Endothelial cell of umbilical vein (primary cell): ENCODE measurements at regions of chr13 and their contacts with region 1.

Region 1: GRCh38 chr13:37109051-37109678 is 3.7 kb upstream of the CSNK1A1L start:
- DNase-seq: peak; percentile 76
- H3K4me3 ChIP-seq: no peak overlapping the region
- H3K27ac ChIP-seq: no peak overlapping the region
- H3K4me1 ChIP-seq: no peaks in the 10 kb centered on the region
- H3K27me3 ChIP-seq: peaks cover 0 to 2% of the 10 kb centered on the region in 2 experiments
- CTCF ChIP-seq: peak; percentile 38 to 47
- POLR2A ChIP-seq: no peak

Region 2: DNA sequence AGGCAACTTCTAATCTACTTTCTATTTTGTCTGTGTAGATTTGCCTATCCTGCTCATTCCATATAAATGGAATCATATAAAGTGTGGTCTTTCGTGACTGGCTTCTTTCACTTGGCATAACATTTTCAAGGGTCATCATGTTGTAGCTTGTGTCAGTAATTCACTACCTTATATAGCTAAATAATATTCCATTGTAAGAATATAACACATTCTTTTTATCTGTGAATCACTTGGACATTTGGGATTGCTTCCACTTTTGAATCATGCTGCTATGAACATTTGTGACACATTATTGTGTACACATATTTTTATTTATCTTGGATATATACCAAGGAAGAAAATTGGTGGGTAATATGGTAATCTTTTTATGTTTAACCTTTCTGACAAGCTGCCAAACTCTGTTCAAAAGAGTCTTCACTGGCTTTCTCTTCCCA is 85.3 kb after region 1 on chr13:
- CTCF ChIA-PET with region 1: no interaction called
- POLR2A ChIA-PET with region 1: no interaction called
- dilution Hi-C with region 1: no loop called
- intact Hi-C with region 1: no loop called
- DNase-seq: peak; percentile 71
- H3K4me3 ChIP-seq: no peak overlapping the region
- H3K27ac ChIP-seq: no peak overlapping the region
- H3K4me1 ChIP-seq: peaks cover 12% of the 10 kb centered on the region
- H3K27me3 ChIP-seq: no peaks in the 10 kb centered on the region
- CTCF ChIP-seq: no peak
- POLR2A ChIP-seq: no peak

Region 3: GRCh38 chr13:37270226-37271001 is 161.2 kb after region 1 on chr13:
- CTCF ChIA-PET with region 1: no interaction called
- POLR2A ChIA-PET with region 1: no interaction called
- dilution Hi-C with region 1: no loop called
- intact Hi-C with region 1: loop called (anchors 1 kb)
- DNase-seq: no peak
- H3K4me3 ChIP-seq: no peak overlapping the region
- H3K27ac ChIP-seq: no peak overlapping the region
- H3K4me1 ChIP-seq: no peaks in the 10 kb centered on the region
- H3K27me3 ChIP-seq: peaks cover 1 to 7% of the 10 kb centered on the region in 2 experiments
- CTCF ChIP-seq: no peak
- POLR2A ChIP-seq: no peak

Region 4: GRCh38 chr13:37473035-37473434 is 363.9 kb after region 1 on chr13:
- CTCF ChIA-PET with region 1: no interaction called
- POLR2A ChIA-PET with region 1: no interaction called
- dilution Hi-C with region 1: no loop called
- intact Hi-C with region 1: loop called (anchors 5 kb)
- DNase-seq: no peak
- H3K4me3 ChIP-seq: no peak overlapping the region
- H3K27ac ChIP-seq: no peak overlapping the region
- H3K4me1 ChIP-seq: no peaks in the 10 kb centered on the region
- H3K27me3 ChIP-seq: peaks cover 0 to 2% of the 10 kb centered on the region in 2 experiments
- CTCF ChIP-seq: peak in 1 of 2 donors; percentile 6
- POLR2A ChIP-seq: no peak

Region 5: DNA sequence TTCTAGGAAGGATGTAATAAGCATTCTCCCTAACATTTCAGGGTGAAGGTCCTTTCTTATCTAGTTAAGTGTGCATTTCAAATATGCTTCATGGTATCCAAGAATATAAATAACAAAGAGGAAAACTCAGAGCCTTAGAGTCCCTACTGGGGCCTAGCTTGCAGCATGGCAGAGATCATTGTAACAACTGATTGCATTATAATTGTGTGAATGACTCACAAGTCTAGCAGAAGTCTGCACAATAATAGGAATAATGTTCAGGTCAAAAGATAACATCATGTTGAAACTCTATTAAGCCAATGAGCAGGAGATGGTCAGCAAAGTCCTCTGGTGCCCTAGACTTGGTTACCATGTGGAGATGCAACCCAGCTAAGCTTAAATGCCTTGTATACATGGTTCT is 486.0 kb after region 1 on chr13:
- CTCF ChIA-PET with region 1: interaction called, 102 read pairs
- POLR2A ChIA-PET with region 1: no interaction called
- dilution Hi-C with region 1: no loop called
- intact Hi-C with region 1: no loop called
- DNase-seq: peak; percentile 52
- H3K4me3 ChIP-seq: no peak overlapping the region
- H3K27ac ChIP-seq: no peak overlapping the region
- H3K4me1 ChIP-seq: peaks cover 12% of the 10 kb centered on the region
- H3K27me3 ChIP-seq: no peaks in the 10 kb centered on the region
- CTCF ChIP-seq: no peak
- POLR2A ChIP-seq: no peak

Region 6: GRCh38 chr13:37602747-37603381 is 493.7 kb after region 1 on chr13:
- CTCF ChIA-PET with region 1: interaction called, 102 read pairs
- POLR2A ChIA-PET with region 1: no interaction called
- dilution Hi-C with region 1: no loop called
- intact Hi-C with region 1: loop called (anchors 1 kb)
- DNase-seq: peak; percentile 55
- H3K4me3 ChIP-seq: no peak overlapping the region
- H3K27ac ChIP-seq: no peak overlapping the region
- H3K4me1 ChIP-seq: peaks cover 12% of the 10 kb centered on the region
- H3K27me3 ChIP-seq: peaks cover 0 to 4% of the 10 kb centered on the region in 2 experiments
- CTCF ChIP-seq: peak; percentile 18 to 24
- POLR2A ChIP-seq: no peak

Region 7: GRCh38 chr13:38045307-38046048 is 936.3 kb after region 1 on chr13:
- CTCF ChIA-PET with region 1: no interaction called
- POLR2A ChIA-PET with region 1: no interaction called
- dilution Hi-C with region 1: no loop called
- intact Hi-C with region 1: loop called (anchors 10 kb)
- DNase-seq: peak; percentile 40
- H3K4me3 ChIP-seq: no peak overlapping the region
- H3K27ac ChIP-seq: no peak overlapping the region
- H3K4me1 ChIP-seq: no peaks in the 10 kb centered on the region
- H3K27me3 ChIP-seq: no peaks in the 10 kb centered on the region
- CTCF ChIP-seq: peak; percentile 61 to 73
- POLR2A ChIP-seq: no peak